ENCODE measurements at regions of chr4 and their contacts with region 1.

Region 1: GRCh38 chr4:98143001-98143899 is at the start of gene STPG2:
- DNase-seq: peak; percentile 93
- ATAC-seq: peak; percentile 100
- total RNA-seq, gene STPG2: 0.12 to 0.24 TPM

Region 2: DNA sequence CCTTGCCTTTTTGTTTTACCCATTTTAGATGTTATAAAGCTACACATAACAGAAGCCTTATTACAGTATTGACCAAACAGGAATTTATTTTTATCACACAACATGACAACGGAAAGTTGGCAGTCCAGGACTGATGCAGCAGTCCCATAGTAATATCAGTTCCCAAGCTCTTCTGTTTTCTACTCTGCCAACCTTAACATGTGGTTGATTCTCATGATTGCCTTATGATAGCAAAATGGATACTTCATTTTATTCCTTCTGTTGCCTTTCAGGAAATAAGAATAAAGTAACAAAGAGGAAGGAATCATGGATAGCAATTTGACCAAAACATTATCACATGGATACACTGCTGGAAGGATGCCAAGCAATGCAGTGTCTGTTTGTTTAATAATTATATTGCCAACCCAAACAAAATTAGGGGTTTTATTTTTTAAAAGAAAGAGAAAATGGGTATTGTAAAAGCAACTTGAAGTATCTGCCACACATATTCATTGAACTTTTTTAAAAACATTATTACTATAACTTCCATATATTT is 275.6 kb before region 1 on chr4:
- intact Hi-C with region 1: no loop called
- DNase-seq: no peak
- ATAC-seq: no peak

Region 3: DNA sequence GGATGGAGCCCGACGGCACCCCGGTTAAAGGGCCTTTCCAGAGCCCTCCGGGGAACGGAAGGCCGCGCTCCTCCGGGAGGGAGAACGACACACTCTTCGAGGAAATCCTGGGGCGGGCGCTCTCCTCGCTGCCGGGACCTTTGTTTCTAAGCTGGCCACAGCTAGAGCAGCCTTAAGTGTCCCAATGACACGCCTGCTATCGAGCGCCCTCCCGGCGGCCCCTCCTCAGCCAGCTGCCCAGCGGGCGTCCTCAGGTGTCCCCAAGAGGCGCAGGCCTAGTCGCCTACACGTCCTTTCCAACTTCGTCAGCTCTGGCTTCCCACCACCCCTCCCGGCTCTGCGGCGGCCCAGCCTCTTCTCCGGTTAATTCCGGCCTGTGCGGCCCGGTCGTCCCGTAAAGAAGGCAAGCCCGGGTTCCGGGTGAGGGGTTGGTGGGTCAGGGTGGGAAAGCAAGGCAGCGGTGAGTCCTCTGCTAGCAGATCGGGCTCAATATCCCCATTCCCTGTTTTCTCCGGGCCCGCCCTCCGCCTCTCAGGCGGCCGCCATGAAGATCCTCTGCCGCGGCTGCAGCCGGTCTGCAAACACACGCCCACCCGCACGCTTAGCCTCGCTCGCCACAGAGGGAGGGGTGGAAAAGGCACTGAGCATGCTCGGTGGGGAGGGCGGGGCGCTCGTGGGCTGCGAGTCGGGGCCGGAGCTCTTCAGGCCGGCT is 117.5 kb after region 1 on chr4:
- intact Hi-C with region 1: loop called in 1 of 2 experiments (anchors 5 kb)
- DNase-seq: peak; percentile 97
- ATAC-seq: peak; percentile 96 to 98